Ovary (tissue), 10 donors: ENCODE measurements at regions of chr2 and their contacts with region 1.

Region 1: GRCh38 chr2:133213651-133214050 is 354.6 kb downstream of the NCKAP5 start:
- DNase-seq: no peak
- H3K4me3 ChIP-seq: no peak overlapping the region
- H3K27ac ChIP-seq: no peak overlapping the region
- H3K4me1 ChIP-seq: no peaks in the 10 kb centered on the region
- H3K27me3 ChIP-seq: no peaks in the 10 kb centered on the region
- CTCF ChIP-seq: no peak
- EP300 ChIP-seq: no peak
- POLR2A ChIP-seq: no peak

Region 2: DNA sequence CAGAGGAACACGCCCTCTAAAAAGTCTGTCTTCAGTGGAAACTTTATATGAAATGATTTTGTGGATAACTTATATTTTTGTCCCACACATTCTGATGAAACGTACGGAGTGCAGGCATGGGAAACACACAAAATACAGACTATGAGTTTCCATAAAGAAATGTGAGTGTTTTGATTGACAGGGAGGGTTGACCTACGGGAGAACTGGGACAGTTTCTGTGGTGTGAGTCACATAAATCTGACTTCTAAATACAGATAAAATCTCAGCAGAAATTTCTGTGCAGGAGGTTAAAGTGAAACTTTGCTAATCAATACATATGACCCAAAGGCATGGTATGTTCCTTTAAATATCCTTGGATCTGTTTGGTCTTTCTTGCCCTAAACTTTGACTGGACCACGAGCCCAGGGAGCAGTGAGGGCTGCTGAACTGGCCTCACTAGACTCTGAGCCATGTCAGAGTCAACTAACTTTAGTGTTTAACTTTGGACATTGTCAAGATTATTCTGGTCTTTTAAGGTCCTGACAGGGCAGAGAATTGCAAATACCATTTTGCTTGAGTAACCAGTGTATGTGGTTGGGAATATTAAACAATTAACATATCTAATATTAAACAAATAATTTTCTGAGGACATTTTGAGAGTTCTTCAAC is 336.8 kb before region 1 on chr2:
- intact Hi-C with region 1: no loop called
- DNase-seq: no peak
- H3K4me3 ChIP-seq: no peak overlapping the region
- H3K27ac ChIP-seq: no peak overlapping the region
- H3K4me1 ChIP-seq: no peaks in the 10 kb centered on the region
- H3K27me3 ChIP-seq: no peaks in the 10 kb centered on the region
- CTCF ChIP-seq: no peak
- EP300 ChIP-seq: no peak
- POLR2A ChIP-seq: no peak

Region 3: GRCh38 chr2:132896073-132896472 is 317.6 kb before region 1 on chr2:
- intact Hi-C with region 1: no loop called
- DNase-seq: no peak
- H3K4me3 ChIP-seq: no peak overlapping the region
- H3K27ac ChIP-seq: no peak overlapping the region
- H3K4me1 ChIP-seq: no peaks in the 10 kb centered on the region
- H3K27me3 ChIP-seq: no peaks in the 10 kb centered on the region
- CTCF ChIP-seq: no peak
- EP300 ChIP-seq: no peak
- POLR2A ChIP-seq: no peak

Region 4: DNA sequence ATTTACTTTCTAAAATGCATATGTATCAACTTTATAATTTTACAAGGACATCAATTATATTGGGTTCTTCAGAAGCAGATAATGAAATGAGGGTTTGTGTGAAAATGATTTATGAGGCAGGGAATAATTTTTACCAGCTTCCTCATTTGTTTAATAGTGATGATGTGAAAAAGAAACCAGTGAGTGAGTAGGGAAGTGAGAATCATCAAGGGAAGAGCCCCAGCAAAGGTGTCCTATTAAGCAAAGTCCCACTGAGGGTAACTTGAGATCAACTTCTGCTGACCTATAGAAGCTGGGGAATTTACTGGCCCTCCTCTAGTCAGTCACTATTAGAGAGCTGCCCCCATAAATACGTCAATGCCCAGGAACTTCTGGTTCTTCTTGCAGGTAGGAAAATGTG is 276.9 kb before region 1 on chr2:
- intact Hi-C with region 1: no loop called
- DNase-seq: no peak
- H3K4me3 ChIP-seq: no peak overlapping the region
- H3K27ac ChIP-seq: no peak overlapping the region
- H3K4me1 ChIP-seq: no peaks in the 10 kb centered on the region
- H3K27me3 ChIP-seq: no peaks in the 10 kb centered on the region
- CTCF ChIP-seq: no peak
- EP300 ChIP-seq: no peak
- POLR2A ChIP-seq: no peak

Region 5: GRCh38 chr2:133122529-133122928 is 91.1 kb before region 1 on chr2:
- intact Hi-C with region 1: no loop called
- DNase-seq: no peak
- H3K4me3 ChIP-seq: no peak overlapping the region
- H3K27ac ChIP-seq: no peak overlapping the region
- H3K4me1 ChIP-seq: peaks cover 3% of the 10 kb centered on the region
- H3K27me3 ChIP-seq: no peaks in the 10 kb centered on the region
- CTCF ChIP-seq: no peak
- EP300 ChIP-seq: no peak
- POLR2A ChIP-seq: no peak

Region 6: DNA sequence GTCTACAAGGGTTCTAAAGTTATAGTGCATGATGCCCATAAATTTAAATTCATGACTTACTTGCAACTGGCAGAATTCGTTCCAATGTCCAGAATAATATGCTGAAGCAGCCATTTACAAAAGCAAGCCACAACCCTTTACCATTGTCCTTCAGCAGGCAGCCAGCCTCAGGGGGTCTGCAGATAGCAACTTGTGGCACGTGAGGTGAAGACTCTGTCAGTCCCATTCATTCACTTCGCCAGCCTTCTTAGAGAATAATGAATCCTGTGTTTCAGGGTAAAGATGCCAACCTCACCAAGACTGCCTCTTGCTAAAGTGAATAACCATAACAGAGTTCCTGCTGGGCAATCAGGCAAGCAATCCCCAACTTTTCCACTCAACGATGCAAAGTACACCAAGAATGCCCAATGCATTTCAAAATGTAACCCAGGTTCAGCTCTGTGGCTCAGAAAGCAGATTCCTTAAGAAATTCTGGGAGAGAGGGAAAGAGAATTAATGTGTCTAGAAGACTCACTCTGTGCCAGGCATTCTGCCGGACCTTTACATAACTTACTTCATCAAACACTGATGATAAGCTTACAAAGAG is 39.2 kb after region 1 on chr2:
- intact Hi-C with region 1: loop called in 1 of 4 experiments (anchors 2 kb)
- DNase-seq: no peak
- H3K4me3 ChIP-seq: no peak overlapping the region
- H3K27ac ChIP-seq: no peak overlapping the region
- H3K4me1 ChIP-seq: peaks cover 16% of the 10 kb centered on the region
- H3K27me3 ChIP-seq: no peaks in the 10 kb centered on the region
- CTCF ChIP-seq: no peak
- EP300 ChIP-seq: no peak
- POLR2A ChIP-seq: no peak